ENCODE measurements at regions of chr3 and their contacts with region 1.

Region 1: DNA sequence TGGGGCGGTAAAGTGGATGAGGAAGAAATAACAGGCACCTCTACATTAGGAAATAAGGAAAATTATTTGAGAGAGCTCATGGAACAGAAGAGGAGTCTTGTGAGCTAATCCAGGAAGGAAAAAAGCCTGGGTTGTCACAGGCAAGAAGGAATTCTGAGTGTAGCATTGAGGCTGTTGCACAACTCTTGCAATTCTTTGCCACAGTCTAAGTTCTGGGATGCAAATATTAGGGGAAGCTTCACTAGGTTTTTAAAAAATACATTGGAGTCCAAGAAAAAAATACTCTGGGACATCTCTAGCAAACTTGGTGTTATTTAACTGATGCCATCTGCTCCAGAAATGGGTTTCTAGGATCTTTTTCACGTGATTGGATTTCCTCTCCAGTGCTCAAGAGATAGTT is 122.3 kb downstream of the SPATA16 start:
- DNase-seq: no peak
- H3K4me3 ChIP-seq: no peak overlapping the region
- H3K4me3 Mint-ChIP-seq: no peak overlapping the region
- H3K27ac ChIP-seq: no peak overlapping the region
- H3K27ac Mint-ChIP-seq: no peak overlapping the region
- H3K4me1 ChIP-seq: no peaks in the 10 kb centered on the region
- H3K4me1 Mint-ChIP-seq: no peaks in the 10 kb centered on the region
- H3K27me3 ChIP-seq: no peaks in the 10 kb centered on the region
- H3K27me3 Mint-ChIP-seq: peaks cover 0 to 1% of the 10 kb centered on the region in 2 donors

Region 2: DNA sequence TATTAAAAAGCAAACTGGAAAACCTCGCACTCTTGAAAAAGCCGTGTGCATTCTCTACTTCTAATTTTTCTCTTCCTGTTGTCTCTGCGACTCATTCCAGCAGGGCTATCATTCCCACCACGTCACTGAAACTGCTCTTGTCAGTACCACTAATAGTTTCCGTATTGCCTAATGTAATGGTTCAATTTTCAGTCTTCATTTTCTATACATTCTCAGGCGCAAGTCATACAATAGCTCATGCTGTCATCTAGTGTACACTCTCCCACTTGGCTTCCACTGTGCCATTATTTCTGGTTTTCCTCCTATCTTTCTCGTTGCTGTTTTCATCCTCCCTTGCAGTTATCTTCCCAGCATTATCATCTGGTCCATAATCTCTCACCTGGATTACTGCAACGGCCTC is 37.9 kb before region 1 on chr3:
- CTCF ChIA-PET with region 1: no interaction called
- POLR2A ChIA-PET with region 1: no interaction called
- intact Hi-C with region 1: loop called (anchors 1 kb)
- DNase-seq: no peak
- H3K4me3 ChIP-seq: no peak overlapping the region
- H3K4me3 Mint-ChIP-seq: no peak overlapping the region
- H3K27ac ChIP-seq: no peak overlapping the region
- H3K27ac Mint-ChIP-seq: no peak overlapping the region
- H3K4me1 ChIP-seq: no peaks in the 10 kb centered on the region
- H3K4me1 Mint-ChIP-seq: no peaks in the 10 kb centered on the region
- H3K27me3 ChIP-seq: no peaks in the 10 kb centered on the region
- H3K27me3 Mint-ChIP-seq: peaks cover 0 to 5% of the 10 kb centered on the region in 2 donors

Region 3: GRCh38 chr3:173340626-173341025 is 321.9 kb after region 1 on chr3:
- CTCF ChIA-PET with region 1: no interaction called
- POLR2A ChIA-PET with region 1: no interaction called
- intact Hi-C with region 1: no loop called
- DNase-seq: no peak
- H3K4me3 ChIP-seq: no peak overlapping the region
- H3K4me3 Mint-ChIP-seq: no peak overlapping the region
- H3K27ac ChIP-seq: no peak overlapping the region
- H3K27ac Mint-ChIP-seq: no peak overlapping the region
- H3K4me1 ChIP-seq: no peaks in the 10 kb centered on the region
- H3K4me1 Mint-ChIP-seq: no peaks in the 10 kb centered on the region
- H3K27me3 ChIP-seq: no peaks in the 10 kb centered on the region
- H3K27me3 Mint-ChIP-seq: no peaks in the 10 kb centered on the region